Dorsolateral prefrontal cortex (tissue), 120 donors: ENCODE measurements at regions of chr9 and their contacts with region 1.

Region 1: DNA sequence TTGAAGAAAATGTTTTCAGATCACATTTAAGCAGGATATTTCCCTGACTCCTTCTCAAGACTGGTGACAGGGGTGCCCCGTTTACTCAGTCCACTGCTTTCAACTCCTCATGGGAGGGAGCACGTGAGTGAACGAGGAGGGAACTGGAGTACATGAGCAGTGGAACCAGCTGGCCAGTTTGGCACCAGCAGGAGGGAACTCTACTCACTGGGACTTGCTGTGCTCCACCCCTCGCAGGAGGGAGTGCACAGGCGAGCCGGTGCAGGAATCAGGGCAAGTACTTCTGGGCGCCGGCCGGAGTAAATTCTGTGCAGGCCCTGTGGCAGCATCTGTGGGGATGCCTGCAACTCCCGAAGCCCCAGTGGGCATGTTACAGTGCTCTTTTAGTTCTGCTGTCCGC is 1941.1 kb upstream of the C9orf72 start:
- DNase-seq: peak; percentile 3 to 76 (median 58)
- H3K4me3 ChIP-seq: peak overlapping the region in 44 of 59 donors; percentile 6 to 59 (median 32)
- H3K27ac ChIP-seq: peak overlapping the region in 58 of 59 donors; percentile 3 to 92 (median 78)
- H3K27me3 ChIP-seq: no peaks in the 10 kb centered on the region
- CTCF ChIP-seq: peak in 1 of 56 donors; percentile 10

Region 2: DNA sequence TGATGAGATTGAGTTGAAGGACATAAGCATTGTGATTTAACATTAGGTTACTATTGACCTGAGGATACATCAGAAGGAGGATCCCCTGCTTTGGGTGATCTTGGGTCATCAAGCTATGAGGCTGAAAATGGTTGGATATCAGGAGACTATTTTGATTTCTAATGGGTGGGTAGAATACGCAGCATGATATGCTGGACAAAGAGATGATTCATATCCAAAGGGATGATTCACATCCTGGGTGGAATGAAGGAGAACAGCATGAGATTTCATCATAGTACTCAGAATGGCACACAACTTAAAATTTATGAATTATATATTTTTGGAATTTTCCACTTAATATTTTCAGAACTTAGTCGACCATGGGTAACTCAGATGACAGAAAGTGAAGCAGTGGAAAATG is 181.5 kb before region 1 on chr9:
- intact Hi-C with region 1: no loop called
- DNase-seq: no peak
- H3K4me3 ChIP-seq: no peak overlapping the region
- H3K27ac ChIP-seq: no peak overlapping the region
- H3K27me3 ChIP-seq: no peaks in the 10 kb centered on the region
- CTCF ChIP-seq: no peak

Region 3: GRCh38 chr9:29449294-29449693 is 65.0 kb before region 1 on chr9:
- intact Hi-C with region 1: no loop called
- DNase-seq: no peak
- H3K4me3 ChIP-seq: no peak overlapping the region
- H3K27ac ChIP-seq: no peak overlapping the region
- H3K27me3 ChIP-seq: no peaks in the 10 kb centered on the region
- CTCF ChIP-seq: no peak

Region 4: DNA sequence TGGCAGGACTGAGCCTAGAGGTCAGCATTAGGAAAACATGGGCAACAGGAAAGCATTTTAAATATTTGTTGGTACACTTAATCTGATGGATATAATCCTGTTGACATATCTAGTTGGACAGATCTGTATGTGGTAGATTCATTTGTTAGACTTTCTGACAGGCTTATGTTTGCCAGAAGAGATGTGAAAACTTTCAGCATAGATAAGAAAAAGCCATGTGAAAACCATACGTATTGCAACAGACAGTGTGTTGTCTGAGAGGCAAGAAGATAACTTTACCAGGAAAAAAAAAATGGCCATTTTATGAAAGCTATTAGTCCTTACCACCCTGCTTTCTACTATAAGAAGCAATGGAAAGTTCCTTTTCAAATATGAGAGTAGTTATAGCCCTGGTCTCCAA is 38.9 kb before region 1 on chr9:
- intact Hi-C with region 1: no loop called
- DNase-seq: no peak
- H3K4me3 ChIP-seq: no peak overlapping the region
- H3K27ac ChIP-seq: no peak overlapping the region
- H3K27me3 ChIP-seq: no peaks in the 10 kb centered on the region
- CTCF ChIP-seq: no peak

Region 5: GRCh38 chr9:29685531-29685930 is 171.2 kb after region 1 on chr9:
- intact Hi-C with region 1: loop called in 1 of 2 experiments (anchors 10 kb)
- DNase-seq: no peak
- H3K4me3 ChIP-seq: no peak overlapping the region
- H3K27ac ChIP-seq: no peak overlapping the region
- H3K27me3 ChIP-seq: no peaks in the 10 kb centered on the region
- CTCF ChIP-seq: no peak